ENCODE measurements at regions of chr17 and their contacts with region 1.

Region 1: DNA sequence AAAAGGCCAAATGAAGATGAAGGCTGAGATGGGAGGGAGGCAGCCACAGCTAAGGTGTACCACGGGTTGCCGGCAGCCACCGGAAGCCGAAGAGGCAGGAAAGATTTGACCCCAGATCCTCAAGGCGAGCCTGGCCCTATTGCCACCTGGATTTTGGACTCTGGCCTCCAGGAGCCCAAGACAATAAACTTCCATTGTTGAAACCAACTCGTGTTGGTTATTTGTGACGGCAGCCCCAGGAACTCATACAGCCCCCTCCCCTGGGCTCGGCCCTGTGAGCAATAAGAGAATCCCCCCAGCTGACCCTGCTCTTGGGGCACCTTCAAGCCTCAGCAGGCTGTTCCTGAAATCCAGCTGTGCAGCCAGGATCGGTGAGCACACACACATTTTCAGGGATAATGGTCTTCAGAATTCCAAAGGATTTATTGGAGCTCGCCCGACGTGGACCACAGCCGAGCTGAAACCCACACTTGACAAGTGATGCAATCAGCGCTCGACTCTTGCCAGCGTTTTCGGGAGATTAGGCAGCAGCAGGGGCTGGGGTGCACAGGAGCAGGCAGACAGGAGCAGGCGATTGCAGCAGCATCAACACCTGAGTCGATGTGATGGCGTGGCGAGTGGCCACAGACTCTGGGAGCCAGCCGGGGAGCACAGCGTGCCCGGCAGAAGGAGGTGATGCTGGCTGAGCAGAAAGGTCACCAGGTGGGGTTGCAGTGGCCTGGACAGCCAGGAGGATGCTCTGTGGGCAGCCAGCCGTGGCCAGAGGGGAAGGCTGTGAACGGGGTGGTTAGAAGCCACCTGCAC is 22.4 kb upstream of the CBX4 start:
- DNase-seq: peak in 1 of 3 donors; percentile 12
- ATAC-seq: no peak
- H3K4me3 ChIP-seq: no peak overlapping the region
- H3K27ac ChIP-seq: no peak overlapping the region
- H3K4me1 ChIP-seq: no peaks in the 10 kb centered on the region
- H3K27me3 ChIP-seq: no peaks in the 10 kb centered on the region

Region 2: GRCh38 chr17:79728226-79728907 is 133.2 kb before region 1 on chr17:
- intact Hi-C with region 1: no loop called
- DNase-seq: peak; percentile 80 to 87 (median 86)
- ATAC-seq: peak; percentile 84 to 85
- H3K4me3 ChIP-seq: peak overlapping the region; percentile 48
- H3K27ac ChIP-seq: no peak overlapping the region
- H3K4me1 ChIP-seq: peaks cover 3% of the 10 kb centered on the region
- H3K27me3 ChIP-seq: no peaks in the 10 kb centered on the region

Region 3: GRCh38 chr17:79929257-79930061 is 67.8 kb after region 1 on chr17:
- intact Hi-C with region 1: loop called in 1 of 4 experiments (anchors 2 kb)
- DNase-seq: peak in 1 of 3 donors; percentile 56
- ATAC-seq: no peak
- H3K4me3 ChIP-seq: no peak overlapping the region
- H3K27ac ChIP-seq: no peak overlapping the region
- H3K4me1 ChIP-seq: no peaks in the 10 kb centered on the region
- H3K27me3 ChIP-seq: no peaks in the 10 kb centered on the region